ENCODE measurements at regions of chr14 and their contacts with region 1.

Region 1: GRCh38 chr14:57268161-57269069 is at the starts of genes AP5M1 and EXOC5:
- DNase-seq: peak; percentile 96
- ATAC-seq: peak; percentile 93
- H3K4me3 Mint-ChIP-seq: peak within 1 kb of the TSS; percentile 90
- H3K27ac Mint-ChIP-seq: peak within 1 kb of the TSS; percentile 99
- H3K4me1 Mint-ChIP-seq: peaks cover 53% of the 10 kb centered on the region
- H3K27me3 Mint-ChIP-seq: no peaks in the 10 kb centered on the region
- total RNA-seq, gene AP5M1: 30.8 to 32.7 TPM
- total RNA-seq, gene EXOC5: 66.5 to 80.2 TPM

Region 2: GRCh38 chr14:56150645-56151345 is 1117.6 kb before region 1 on chr14:
- CTCF ChIA-PET with region 1: no interaction called
- POLR2A ChIA-PET with region 1: no interaction called
- intact Hi-C with region 1: no loop called
- DNase-seq: peak; percentile 53
- ATAC-seq: peak; percentile 55
- H3K4me3 Mint-ChIP-seq: no peak overlapping the region
- H3K27ac Mint-ChIP-seq: no peak overlapping the region
- H3K4me1 Mint-ChIP-seq: peaks cover 46% of the 10 kb centered on the region
- H3K27me3 Mint-ChIP-seq: peaks cover 4% of the 10 kb centered on the region

Region 3: GRCh38 chr14:56579345-56580220 is 688.8 kb before region 1 on chr14 and contains the start of gene TMEM260:
- CTCF ChIA-PET with region 1: no interaction called
- POLR2A ChIA-PET with region 1: no interaction called
- intact Hi-C with region 1: loop called in 1 of 2 experiments (anchors 1 kb)
- DNase-seq: peak; percentile 93
- ATAC-seq: peak; percentile 89
- H3K4me3 Mint-ChIP-seq: peak within 1 kb of the TSS; percentile 82
- H3K27ac Mint-ChIP-seq: peak within 1 kb of the TSS; percentile 95
- H3K4me1 Mint-ChIP-seq: peaks cover 33% of the 10 kb centered on the region
- H3K27me3 Mint-ChIP-seq: no peaks in the 10 kb centered on the region
- total RNA-seq, gene TMEM260: 15.2 to 17.9 TPM

Region 4: DNA sequence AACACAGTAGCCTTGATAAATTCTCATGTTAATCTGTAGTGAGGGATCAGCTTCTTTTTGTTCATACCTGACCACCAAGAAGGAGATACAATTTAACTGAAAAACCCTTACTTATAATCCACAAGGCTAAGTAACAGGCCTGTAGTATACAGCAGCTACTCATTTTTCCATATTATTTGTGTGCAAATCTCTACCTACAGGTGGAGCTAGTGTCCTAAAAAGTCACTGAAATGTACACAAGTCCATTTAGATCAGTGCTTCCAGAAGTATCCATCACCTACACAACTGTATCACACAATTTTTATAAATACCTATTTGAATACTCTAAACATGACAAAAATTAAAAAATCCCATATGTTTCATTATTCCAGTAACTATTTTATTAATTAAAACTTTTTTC is 424.3 kb after region 1 on chr14:
- CTCF ChIA-PET with region 1: no interaction called
- POLR2A ChIA-PET with region 1: no interaction called
- intact Hi-C with region 1: no loop called
- DNase-seq: no peak
- ATAC-seq: no peak
- H3K4me3 Mint-ChIP-seq: no peak overlapping the region
- H3K27ac Mint-ChIP-seq: no peak overlapping the region
- H3K4me1 Mint-ChIP-seq: no peaks in the 10 kb centered on the region
- H3K27me3 Mint-ChIP-seq: peaks cover 2% of the 10 kb centered on the region

Measured in activated CD4-positive, alpha-beta T cell treated with anti-CD3 and anti-CD28 coated beads for 36 hours (primary cell).